CD14-positive monocyte (primary cell): ENCODE measurements at regions of chr16 and their contacts with region 1.

Region 1: GRCh38 chr16:10964039-10964890 is 19.9 kb downstream of the CLEC16A start:
- DNase-seq: peak; percentile 71 to 75 (median 72)
- H3K4me3 ChIP-seq: no peak overlapping the region
- H3K4me3 Mint-ChIP-seq: no peak overlapping the region
- H3K27ac ChIP-seq: no peak overlapping the region
- H3K27ac Mint-ChIP-seq: peak overlapping the region in 2 of 7 donors; percentile 46 to 59
- H3K4me1 ChIP-seq: peaks cover under 1 to 2% of the 10 kb centered on the region in 2 donors
- H3K4me1 Mint-ChIP-seq: peaks cover 17% of the 10 kb centered on the region
- H3K27me3 ChIP-seq: no peaks in the 10 kb centered on the region
- H3K27me3 Mint-ChIP-seq: peaks cover 0 to 3% (median 0%) of the 10 kb centered on the region in 3 donors
- CTCF ChIP-seq: peak; percentile 94

Region 2: GRCh38 chr16:11356573-11357331 is 392.5 kb after region 1 on chr16:
- intact Hi-C with region 1: loop called (anchors 5 to 10 kb)
- DNase-seq: peak; percentile 47 to 71 (median 68)
- H3K4me3 ChIP-seq: no peak overlapping the region
- H3K4me3 Mint-ChIP-seq: peak overlapping the region in 1 of 2 donors; percentile 81
- H3K27ac ChIP-seq: no peak overlapping the region
- H3K27ac Mint-ChIP-seq: peak overlapping the region in 1 of 7 donors; percentile 66
- H3K4me1 ChIP-seq: peaks cover 23 to 28% of the 10 kb centered on the region in 2 donors
- H3K4me1 Mint-ChIP-seq: peaks cover 35% of the 10 kb centered on the region
- H3K27me3 ChIP-seq: peaks cover 39 to 51% of the 10 kb centered on the region in 2 donors
- H3K27me3 Mint-ChIP-seq: peaks cover 52 to 73% (median 59%) of the 10 kb centered on the region in 3 donors
- CTCF ChIP-seq: peak; percentile 84

Region 3: DNA sequence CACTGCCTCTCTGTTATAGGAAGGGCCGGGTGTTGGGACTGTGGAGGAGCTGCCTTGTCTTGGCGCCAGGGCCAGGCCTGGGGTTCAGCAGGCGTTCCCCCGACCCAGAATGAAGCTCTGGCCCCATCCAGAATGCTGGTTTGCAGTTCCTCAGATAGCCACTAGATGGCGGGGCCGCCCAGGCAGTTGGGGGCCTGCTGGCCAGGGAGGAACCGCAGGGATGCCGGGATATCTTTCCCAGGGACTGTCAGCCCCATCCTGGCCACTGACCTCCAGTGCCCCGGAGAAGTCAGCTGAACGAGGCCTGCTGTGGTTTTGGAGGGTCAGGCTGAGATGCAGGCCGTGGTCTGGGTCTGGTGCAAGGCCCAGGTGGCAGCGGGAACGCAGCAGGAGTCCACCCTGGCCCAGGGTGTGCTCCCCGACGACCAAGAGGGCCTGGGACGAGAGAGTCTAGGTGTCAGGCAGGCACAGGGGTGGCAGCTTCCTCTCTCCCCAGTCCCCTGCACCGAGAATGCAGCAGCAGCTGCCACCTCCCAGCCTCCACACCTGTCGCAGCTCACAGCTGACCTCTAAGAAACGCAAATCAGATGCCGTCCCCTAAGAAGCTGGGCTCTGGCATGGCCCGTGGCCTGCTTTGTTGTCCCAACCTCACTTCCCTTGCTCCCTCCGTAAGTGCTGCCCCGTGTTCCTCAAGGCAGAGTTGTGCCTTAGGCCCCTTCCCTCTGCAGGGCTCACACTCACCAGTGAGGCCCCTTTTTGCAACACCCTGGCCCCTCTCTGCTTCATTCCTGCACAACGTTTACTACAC is 432.2 kb after region 1 on chr16:
- intact Hi-C with region 1: loop called (anchors 5 to 10 kb)
- DNase-seq: peak; percentile 38 to 62 (median 58)
- H3K4me3 ChIP-seq: no peak overlapping the region
- H3K4me3 Mint-ChIP-seq: no peak overlapping the region
- H3K27ac ChIP-seq: no peak overlapping the region
- H3K27ac Mint-ChIP-seq: peak overlapping the region in 2 of 7 donors; percentile 24 to 68
- H3K4me1 ChIP-seq: no peaks in the 10 kb centered on the region
- H3K4me1 Mint-ChIP-seq: no peaks in the 10 kb centered on the region
- H3K27me3 ChIP-seq: no peaks in the 10 kb centered on the region
- H3K27me3 Mint-ChIP-seq: peaks cover 3 to 10% (median 5%) of the 10 kb centered on the region in 3 donors
- CTCF ChIP-seq: peak; percentile 100